ENCODE measurements at regions of chr12 and their contacts with region 1.

Region 1: DNA sequence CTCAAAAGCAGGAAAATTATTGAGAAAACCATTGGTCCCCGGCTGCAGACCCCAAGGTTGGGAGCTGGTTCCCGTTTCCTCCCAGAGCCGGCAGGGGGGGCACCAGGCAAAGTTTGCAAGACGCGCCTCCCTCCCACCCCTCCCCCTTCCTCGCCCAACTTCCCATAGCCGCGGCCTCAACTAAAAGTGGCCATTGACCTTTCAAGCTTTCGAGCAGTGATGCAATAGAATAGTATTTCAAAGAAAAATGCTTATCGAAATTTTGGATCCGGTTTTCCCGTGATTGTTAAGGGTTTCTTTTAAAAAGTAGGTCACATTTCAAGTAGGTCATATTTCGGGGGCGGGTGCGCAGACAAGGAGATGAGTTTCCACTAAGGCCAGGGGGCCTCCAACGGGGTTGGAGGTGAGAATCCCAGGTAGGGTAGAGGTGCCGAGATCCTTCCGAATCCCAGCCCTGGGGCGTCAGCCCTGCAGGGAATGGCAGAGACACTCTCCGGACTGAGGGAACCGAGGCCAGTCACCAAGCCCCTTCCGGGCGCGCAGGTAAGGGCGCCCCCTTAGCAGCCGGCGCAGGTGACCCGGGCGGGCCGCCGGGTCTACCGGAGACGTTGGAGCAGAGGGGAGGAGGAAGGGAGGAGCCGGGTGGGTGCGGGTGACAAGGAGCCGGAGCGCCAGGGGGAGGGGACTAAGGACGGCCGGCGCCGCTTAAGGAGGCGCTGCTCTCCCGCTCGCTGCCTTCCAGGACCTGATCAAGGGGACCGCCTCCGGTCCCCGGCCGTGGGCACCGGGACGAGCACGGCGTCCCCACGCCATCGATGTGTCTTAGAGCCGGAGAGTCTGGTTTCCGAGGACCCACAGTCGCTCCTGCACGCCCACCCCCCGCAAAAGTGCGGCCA is 2.6 kb upstream of the SOCS2 start:
- DNase-seq: peak; percentile 73 to 80 (median 74)
- H3K4me3 ChIP-seq: peak overlapping the region; percentile 71 to 78
- H3K4me3 Mint-ChIP-seq: peak overlapping the region; percentile 90 to 98 (median 92)
- H3K27ac ChIP-seq: peak overlapping the region; percentile 73
- H3K27ac Mint-ChIP-seq: peak overlapping the region; percentile 87 to 96 (median 92)
- H3K4me1 ChIP-seq: peaks cover 28% of the 10 kb centered on the region
- H3K4me1 Mint-ChIP-seq: peaks cover 16 to 41% (median 28%) of the 10 kb centered on the region in 4 donors
- H3K27me3 ChIP-seq: peaks cover 3% of the 10 kb centered on the region
- H3K27me3 Mint-ChIP-seq: peaks cover 1 to 2% of the 10 kb centered on the region in 2 donors

Region 2: GRCh38 chr12:92987362-92987761 is 582.5 kb before region 1 on chr12:
- CTCF ChIA-PET with region 1: interaction called, 3 read pairs
- POLR2A ChIA-PET with region 1: no interaction called
- intact Hi-C with region 1: loop called (anchors 5 kb)
- DNase-seq: peak in 4 of 5 donors; percentile 52 to 61 (median 57)
- H3K4me3 ChIP-seq: no peak overlapping the region
- H3K4me3 Mint-ChIP-seq: peak overlapping the region in 3 of 8 donors; percentile 27 to 33 (median 30)
- H3K27ac ChIP-seq: no peak overlapping the region
- H3K27ac Mint-ChIP-seq: peak overlapping the region in 1 of 7 donors; percentile 9
- H3K4me1 ChIP-seq: peaks cover 7% of the 10 kb centered on the region
- H3K4me1 Mint-ChIP-seq: peaks cover 8 to 11% (median 9%) of the 10 kb centered on the region in 4 donors
- H3K27me3 ChIP-seq: no peaks in the 10 kb centered on the region
- H3K27me3 Mint-ChIP-seq: no peaks in the 10 kb centered on the region

Region 3: DNA sequence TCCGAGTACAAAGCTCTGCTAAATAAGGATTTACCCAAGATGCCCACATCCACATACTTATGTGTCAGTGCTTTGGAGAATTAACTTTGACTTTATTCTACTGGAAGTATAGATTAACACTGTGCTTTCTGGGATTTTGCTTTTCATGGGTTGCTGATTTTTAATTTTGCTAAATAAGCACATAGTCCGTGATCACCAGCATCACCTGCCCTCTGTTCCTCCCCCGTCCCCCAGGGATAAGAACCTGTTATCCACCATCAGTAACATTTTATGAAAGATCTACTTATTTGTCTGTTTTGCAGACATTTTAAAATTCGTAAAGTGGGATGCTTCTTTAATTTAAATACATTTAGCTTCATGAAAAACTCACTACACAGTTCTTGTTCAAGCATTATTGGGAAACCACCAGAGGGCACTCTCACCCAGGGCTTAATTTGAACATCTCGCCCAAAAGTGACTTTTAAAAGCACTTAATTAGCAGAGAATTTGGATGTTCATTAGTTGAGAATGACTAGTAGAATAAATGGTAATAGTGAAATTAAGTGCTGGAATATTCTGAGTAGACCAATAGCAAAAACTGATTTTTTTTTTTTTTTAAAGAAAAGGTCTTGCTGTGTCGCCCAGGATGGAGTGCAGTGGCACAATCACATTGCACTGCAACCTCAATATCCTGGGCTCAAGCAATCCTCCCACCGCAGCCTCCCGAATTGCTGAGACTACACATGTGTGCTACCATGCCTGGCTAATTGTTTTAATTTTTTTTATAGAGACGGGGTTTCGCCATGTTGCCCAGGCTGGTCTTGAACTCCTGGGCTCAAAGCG is 66.9 kb before region 1 on chr12:
- CTCF ChIA-PET with region 1: interaction called, 37 read pairs
- POLR2A ChIA-PET with region 1: no interaction called
- intact Hi-C with region 1: loop called (anchors 1 kb)
- DNase-seq: peak; percentile 53 to 65 (median 60)
- H3K4me3 ChIP-seq: no peak overlapping the region
- H3K4me3 Mint-ChIP-seq: no peak overlapping the region
- H3K27ac ChIP-seq: no peak overlapping the region
- H3K27ac Mint-ChIP-seq: peak overlapping the region in 2 of 7 donors; percentile 5 to 66
- H3K4me1 ChIP-seq: no peaks in the 10 kb centered on the region
- H3K4me1 Mint-ChIP-seq: peaks cover 0 to 6% (median 3%) of the 10 kb centered on the region in 4 donors
- H3K27me3 ChIP-seq: no peaks in the 10 kb centered on the region
- H3K27me3 Mint-ChIP-seq: no peaks in the 10 kb centered on the region

Region 4: DNA sequence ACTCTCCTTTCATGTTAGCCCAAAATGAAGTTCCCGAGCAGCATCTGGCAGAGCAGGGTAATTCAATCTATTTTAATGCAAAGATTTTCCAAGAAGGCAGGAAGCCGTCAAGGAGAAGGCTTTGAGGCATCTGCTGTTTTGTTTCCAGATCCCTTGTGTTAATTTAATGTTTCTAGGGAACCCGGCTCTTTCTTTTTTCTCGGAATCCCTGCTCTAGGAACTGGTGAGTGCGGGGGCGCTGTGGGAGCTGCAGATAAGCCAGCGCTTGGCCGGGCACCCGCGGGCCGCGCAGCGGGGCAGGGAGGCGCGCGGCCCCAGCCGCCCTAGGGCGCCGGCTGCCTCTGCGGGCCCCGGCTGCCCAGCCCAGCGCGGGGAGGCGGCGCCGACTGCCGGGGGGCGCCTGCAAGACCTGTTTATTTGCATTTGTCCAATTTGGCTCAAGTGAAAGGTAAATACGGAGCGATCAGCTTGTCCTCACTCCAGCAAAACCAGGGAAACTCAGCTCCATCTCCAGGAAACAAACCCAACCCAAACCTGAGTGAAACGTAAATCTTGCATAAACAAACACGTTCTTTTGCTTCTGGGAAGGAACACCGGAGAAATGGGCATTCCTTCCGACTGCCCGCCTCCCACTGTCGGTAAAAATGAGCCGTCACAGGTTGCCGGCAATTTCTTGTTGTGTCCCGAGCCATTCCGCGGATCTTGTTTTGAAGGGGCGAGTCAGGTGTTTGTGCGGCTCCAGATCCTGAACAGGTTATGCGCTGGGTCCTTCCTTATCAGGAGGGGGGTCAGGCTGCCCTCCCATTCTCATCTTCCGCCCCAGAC is 172.4 kb after region 1 on chr12:
- CTCF ChIA-PET with region 1: interaction called, 10 read pairs
- POLR2A ChIA-PET with region 1: interaction called, 5 read pairs
- intact Hi-C with region 1: loop called (anchors 1 kb)
- DNase-seq: peak; percentile 40 to 58 (median 50)
- H3K4me3 ChIP-seq: peak overlapping the region; percentile 60 to 72
- H3K4me3 Mint-ChIP-seq: peak overlapping the region; percentile 91 to 98 (median 94)
- H3K27ac ChIP-seq: peak overlapping the region; percentile 63
- H3K27ac Mint-ChIP-seq: peak overlapping the region; percentile 87 to 95 (median 94)
- H3K4me1 ChIP-seq: peaks cover 25% of the 10 kb centered on the region
- H3K4me1 Mint-ChIP-seq: peaks cover 9 to 40% (median 21%) of the 10 kb centered on the region in 4 donors
- H3K27me3 ChIP-seq: no peaks in the 10 kb centered on the region
- H3K27me3 Mint-ChIP-seq: no peaks in the 10 kb centered on the region

Region 5: DNA sequence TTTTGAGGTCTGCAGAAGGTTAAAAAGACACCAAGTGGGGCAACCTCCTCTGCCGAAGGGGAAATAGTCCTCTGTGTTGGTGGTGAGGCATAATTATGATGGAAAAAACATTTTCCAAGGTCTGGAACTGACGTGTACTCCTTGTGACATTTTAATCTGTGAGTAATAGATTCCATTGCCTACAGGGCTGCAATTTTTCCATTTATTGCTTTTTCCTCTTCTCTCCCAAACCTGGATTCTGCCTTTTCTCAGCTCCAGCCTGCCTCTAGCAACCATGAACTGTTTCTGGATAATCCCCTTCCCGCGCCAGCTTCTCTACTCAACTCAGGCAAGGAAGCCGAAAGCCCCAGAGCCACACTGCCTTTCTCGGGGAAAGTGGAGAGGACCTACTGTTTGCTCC is 348.4 kb after region 1 on chr12:
- CTCF ChIA-PET with region 1: no interaction called
- POLR2A ChIA-PET with region 1: no interaction called
- intact Hi-C with region 1: no loop called
- DNase-seq: no peak
- H3K4me3 ChIP-seq: no peak overlapping the region
- H3K4me3 Mint-ChIP-seq: no peak overlapping the region
- H3K27ac ChIP-seq: no peak overlapping the region
- H3K27ac Mint-ChIP-seq: no peak overlapping the region
- H3K4me1 ChIP-seq: no peaks in the 10 kb centered on the region
- H3K4me1 Mint-ChIP-seq: no peaks in the 10 kb centered on the region
- H3K27me3 ChIP-seq: no peaks in the 10 kb centered on the region
- H3K27me3 Mint-ChIP-seq: no peaks in the 10 kb centered on the region

Region 6: DNA sequence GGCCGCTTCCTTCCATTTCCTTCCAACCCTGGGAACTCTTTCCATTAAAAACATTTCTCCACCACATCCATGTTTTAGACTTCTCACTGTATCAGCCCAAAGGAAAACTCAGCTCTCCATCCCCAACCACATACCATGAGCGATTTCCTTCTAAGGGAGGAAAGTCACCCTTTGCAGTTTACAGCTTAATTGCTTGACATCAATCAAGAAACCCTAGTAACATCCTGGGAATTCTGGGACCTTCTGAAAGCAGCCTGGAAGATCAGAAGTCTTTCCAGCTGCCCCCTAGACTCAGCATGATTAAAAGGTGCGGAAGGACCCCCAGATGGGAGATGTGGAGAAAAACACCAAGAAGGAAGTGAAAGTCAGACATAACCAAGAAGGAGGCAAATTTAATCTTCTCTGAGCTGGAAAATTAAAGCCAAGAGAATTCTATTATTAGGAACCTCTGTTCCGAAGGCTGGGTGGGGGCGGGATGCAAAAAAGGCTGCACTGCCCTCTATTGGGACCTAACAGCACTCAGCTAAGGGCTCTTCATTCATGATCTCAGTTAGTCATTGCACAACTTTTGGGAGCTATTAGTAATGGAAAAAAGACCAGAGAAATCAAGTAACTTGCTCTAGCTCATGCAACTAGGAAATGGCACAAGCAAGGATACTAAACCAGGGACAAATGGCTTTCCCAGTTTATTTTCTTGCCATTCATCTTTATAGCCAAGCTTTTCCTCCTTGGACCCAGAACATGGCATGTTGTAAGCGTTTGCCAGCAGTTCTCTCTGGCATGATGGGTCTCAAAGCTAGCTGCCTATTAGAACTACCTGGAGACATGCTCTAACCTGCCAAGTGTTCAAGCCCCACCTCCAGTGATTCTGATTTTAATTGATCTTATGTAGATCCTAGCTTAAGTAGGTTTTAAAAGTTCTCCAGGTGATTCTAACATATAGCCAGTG is 505.4 kb after region 1 on chr12:
- CTCF ChIA-PET with region 1: interaction called, 13 read pairs
- POLR2A ChIA-PET with region 1: interaction called, 3 read pairs
- intact Hi-C with region 1: loop called (anchors 1 kb)
- DNase-seq: no peak
- H3K4me3 ChIP-seq: no peak overlapping the region
- H3K4me3 Mint-ChIP-seq: no peak overlapping the region
- H3K27ac ChIP-seq: no peak overlapping the region
- H3K27ac Mint-ChIP-seq: no peak overlapping the region
- H3K4me1 ChIP-seq: no peaks in the 10 kb centered on the region
- H3K4me1 Mint-ChIP-seq: peaks cover 14 to 25% (median 20%) of the 10 kb centered on the region in 4 donors
- H3K27me3 ChIP-seq: no peaks in the 10 kb centered on the region
- H3K27me3 Mint-ChIP-seq: peaks cover 1 to 5% of the 10 kb centered on the region in 2 donors

Region 7: GRCh38 chr12:95072900-95073697 is 1503.2 kb after region 1 on chr12 and contains the start of gene NR2C1:
- CTCF ChIA-PET with region 1: no interaction called
- POLR2A ChIA-PET with region 1: no interaction called
- intact Hi-C with region 1: loop called (anchors 5 kb)
- DNase-seq: peak; percentile 92 to 95 (median 94)
- H3K4me3 ChIP-seq: peak within 1 kb of the TSS; percentile 88 to 89
- H3K4me3 Mint-ChIP-seq: peak within 1 kb of the TSS; percentile 93 to 99 (median 95)
- H3K27ac ChIP-seq: peak within 1 kb of the TSS; percentile 76
- H3K27ac Mint-ChIP-seq: peak within 1 kb of the TSS; percentile 84 to 98 (median 96)
- H3K4me1 ChIP-seq: peaks cover 22% of the 10 kb centered on the region
- H3K4me1 Mint-ChIP-seq: peaks cover 14 to 39% (median 20%) of the 10 kb centered on the region in 4 donors
- H3K27me3 ChIP-seq: no peaks in the 10 kb centered on the region
- H3K27me3 Mint-ChIP-seq: no peaks in the 10 kb centered on the region
- total RNA-seq, gene NR2C1: 45.4 to 55.4 TPM